ENCODE measurements at regions of chr11 and their contacts with region 1.

Region 1: DNA sequence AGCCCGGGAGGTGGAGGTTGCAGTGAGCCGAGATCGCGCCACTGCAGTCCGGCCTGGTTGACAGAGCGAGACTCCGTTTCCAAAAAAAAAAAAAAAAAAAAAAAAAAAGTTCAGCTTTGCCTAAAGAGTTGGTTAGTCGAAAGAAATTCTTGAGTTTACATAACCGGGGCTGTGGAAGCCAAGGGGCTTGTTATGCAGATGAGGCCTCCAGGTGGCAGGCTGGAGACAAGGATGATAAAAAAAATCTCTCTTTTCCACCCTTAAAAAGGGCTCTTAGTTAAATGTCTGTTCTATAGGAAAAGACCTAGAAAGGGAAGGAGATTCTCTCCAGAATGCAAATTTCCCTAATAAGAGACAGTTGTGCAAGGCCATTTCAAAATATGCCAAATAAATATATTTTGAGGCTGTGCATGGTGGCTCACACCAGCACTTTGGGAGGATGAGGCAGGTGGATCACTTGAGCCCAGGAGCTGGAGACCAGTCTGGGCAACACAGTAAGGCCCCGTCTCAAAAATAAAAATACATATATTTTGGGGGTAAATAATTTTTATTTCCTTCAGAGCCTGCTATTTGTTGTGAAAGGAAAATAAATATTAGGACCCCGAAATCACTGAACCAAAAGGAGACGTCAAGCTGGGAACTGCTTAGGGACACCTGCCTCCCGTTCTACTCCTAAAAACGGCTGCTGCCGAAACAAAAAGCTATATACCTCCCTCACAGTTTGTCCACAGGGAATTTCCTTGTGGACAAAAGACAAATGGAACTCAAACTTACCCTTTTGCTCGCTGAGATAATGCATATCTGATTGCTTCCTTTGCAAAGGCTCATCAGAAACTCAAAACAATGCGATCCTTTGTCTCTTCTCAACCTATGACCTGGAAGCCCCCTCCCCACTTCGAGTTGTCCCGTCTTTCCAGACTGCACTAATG is 2.4 kb upstream of the IFITM2 start:
- DNase-seq: peak; percentile 81
- ATAC-seq: no peak
- H3K4me3 Mint-ChIP-seq: no peak overlapping the region
- H3K27ac Mint-ChIP-seq: no peak overlapping the region
- H3K4me1 Mint-ChIP-seq: peaks cover 46% of the 10 kb centered on the region
- H3K27me3 Mint-ChIP-seq: peaks cover 17% of the 10 kb centered on the region

Region 2: DNA sequence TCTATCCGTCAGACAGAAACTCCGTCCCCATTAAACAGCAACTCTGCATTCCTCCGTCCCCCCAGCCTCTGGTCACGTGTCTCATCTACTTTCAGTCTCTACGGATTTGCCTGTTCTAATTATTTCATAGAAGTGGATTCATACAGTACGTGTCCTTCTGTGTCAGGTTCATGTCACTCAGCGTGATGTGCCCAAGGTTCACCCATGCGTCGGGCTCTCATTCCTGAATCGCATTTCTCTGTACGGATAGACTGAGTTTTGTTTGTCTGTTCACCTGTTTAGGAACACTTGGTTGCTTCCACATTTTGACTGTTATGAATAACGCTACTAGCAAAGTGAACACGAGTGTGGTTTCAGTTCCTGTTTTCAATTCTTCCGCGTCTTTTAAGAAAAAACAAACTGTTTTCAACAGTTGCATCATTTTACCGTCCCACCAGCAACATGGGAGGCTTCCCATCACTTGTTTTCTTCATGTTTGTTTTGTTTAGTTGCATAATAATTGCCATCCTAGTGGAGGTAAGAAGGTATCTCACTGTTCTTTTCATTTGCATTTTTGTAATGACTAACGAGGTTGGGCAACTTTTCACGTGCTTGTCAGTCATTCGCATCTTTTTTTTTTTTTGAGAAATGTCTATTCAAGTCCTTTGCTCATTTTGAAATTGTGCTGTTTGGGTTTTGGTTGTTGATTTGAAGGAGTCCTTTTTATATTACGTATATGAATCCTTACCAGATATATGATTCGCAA is 35.9 kb before region 1 on chr11:
- CTCF ChIA-PET with region 1: interaction called, 10 read pairs
- DNase-seq: peak; percentile 80
- ATAC-seq: peak; percentile 57
- H3K4me3 Mint-ChIP-seq: peak overlapping the region; percentile 86
- H3K27ac Mint-ChIP-seq: peak overlapping the region; percentile 97
- H3K4me1 Mint-ChIP-seq: peaks cover 32% of the 10 kb centered on the region
- H3K27me3 Mint-ChIP-seq: peaks cover 11% of the 10 kb centered on the region

Region 3: GRCh38 chr11:288328-289144 is 16.6 kb before region 1 on chr11 and contains the start of gene PGGHG:
- CTCF ChIA-PET with region 1: interaction called, 27 read pairs
- DNase-seq: no peak
- ATAC-seq: peak; percentile 72
- H3K4me3 Mint-ChIP-seq: peak within 1 kb of the TSS; percentile 95
- H3K27ac Mint-ChIP-seq: peak within 1 kb of the TSS; percentile 94
- H3K4me1 Mint-ChIP-seq: peaks cover 44% of the 10 kb centered on the region
- H3K27me3 Mint-ChIP-seq: peaks cover 11% of the 10 kb centered on the region
- total RNA-seq, gene PGGHG: 214 to 229 TPM

Region 4: GRCh38 chr11:316031-316701 is 11.0 kb after region 1 on chr11:
- CTCF ChIA-PET with region 1: interaction called, 31 read pairs
- DNase-seq: peak; percentile 77
- ATAC-seq: no peak
- H3K4me3 Mint-ChIP-seq: peak overlapping the region; percentile 97
- H3K27ac Mint-ChIP-seq: peak overlapping the region; percentile 91
- H3K4me1 Mint-ChIP-seq: peaks cover 46% of the 10 kb centered on the region
- H3K27me3 Mint-ChIP-seq: no peaks in the 10 kb centered on the region

Region 5: DNA sequence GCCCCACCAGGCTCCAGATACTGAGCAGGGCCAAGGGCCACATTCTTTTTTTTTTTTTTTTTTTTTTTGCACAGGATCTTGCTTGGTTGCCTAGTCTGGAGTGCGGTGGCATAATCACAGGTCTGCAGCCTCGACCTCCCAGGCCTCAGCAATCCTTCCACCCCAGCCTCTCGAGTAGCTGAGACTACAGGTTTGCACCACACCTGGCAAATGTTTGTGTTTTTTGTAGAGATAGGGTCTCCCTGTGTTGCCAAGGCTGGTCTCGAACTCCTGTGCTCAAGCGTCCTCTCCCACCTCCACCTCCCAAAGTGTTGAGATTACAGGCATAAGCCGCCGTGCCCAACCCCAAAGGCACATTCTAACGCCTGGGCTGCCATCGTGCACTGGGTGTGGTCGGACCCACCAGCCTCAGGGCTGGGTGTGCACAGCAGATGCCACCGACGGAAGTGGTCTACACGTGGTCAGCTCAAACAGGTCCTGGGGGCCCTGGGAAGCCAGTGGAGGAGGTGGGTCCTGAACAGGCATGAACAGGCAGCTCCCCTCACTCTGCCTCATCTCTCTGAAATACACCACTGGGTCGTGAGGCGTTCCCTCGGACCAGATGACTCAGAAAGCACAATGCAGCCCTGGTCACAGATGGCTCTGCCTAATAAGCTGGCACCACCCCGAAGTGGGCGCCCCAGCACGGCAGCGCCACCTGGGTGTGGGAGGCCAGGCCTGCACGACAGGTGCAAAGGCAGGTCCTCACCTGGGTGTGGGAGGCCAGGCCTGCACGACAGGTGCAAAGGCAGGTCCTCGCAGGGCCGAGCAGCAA is 59.0 kb after region 1 on chr11:
- CTCF ChIA-PET with region 1: interaction called, 54 read pairs
- DNase-seq: peak; percentile 67
- ATAC-seq: peak; percentile 75
- H3K4me3 Mint-ChIP-seq: no peak overlapping the region
- H3K27ac Mint-ChIP-seq: peak overlapping the region; percentile 13
- H3K4me1 Mint-ChIP-seq: peaks cover 13% of the 10 kb centered on the region
- H3K27me3 Mint-ChIP-seq: peaks cover 33% of the 10 kb centered on the region